T-cell (primary cell): ENCODE measurements at regions of chr3 and their contacts with region 1.

Region 1: DNA sequence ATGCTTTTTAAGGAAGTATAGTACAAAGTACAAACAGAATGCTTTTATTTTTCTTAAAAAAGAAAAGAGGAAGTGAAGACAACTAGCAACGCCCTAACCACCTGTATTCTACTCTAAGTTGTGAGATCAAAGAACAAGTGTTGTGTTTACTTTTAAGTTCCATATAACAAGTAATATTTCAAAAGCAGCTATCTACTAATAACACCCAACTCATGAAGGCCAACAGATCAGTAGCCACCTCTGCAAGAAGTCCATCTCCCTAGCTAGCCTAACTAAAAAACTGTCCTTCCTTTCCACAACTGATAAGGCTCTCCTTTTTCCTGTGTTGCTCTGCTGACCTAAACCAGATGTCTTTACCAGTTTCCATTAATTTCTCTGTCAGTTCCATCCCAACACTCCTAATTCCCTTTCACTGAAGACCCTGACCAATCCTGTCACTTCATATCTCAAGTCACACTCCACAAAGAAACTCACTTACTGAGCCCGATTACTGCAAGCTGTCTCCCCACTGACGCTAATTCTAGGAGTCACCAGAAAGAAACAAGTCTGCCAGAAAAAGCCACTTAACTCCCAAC is 26.9 kb downstream of the PHC3 start:
- DNase-seq: peak in 1 of 35 experiments; percentile 26
- ATAC-seq: peak; percentile 77 to 90 (median 84)
- H3K4me3 ChIP-seq: peak overlapping the region in 1 of 2 donors; percentile 19
- H3K4me3 Mint-ChIP-seq: peak overlapping the region; percentile 59 to 78 (median 61)
- H3K27ac ChIP-seq: peak overlapping the region; percentile 52
- H3K27ac Mint-ChIP-seq: peak overlapping the region; percentile 93 to 98
- H3K4me1 ChIP-seq: peaks cover 24 to 30% of the 10 kb centered on the region in 2 experiments
- H3K4me1 Mint-ChIP-seq: peaks cover 55 to 65% (median 57%) of the 10 kb centered on the region in 3 donors
- H3K27me3 ChIP-seq: no peaks in the 10 kb centered on the region
- H3K27me3 Mint-ChIP-seq: no peaks in the 10 kb centered on the region

Region 2: GRCh38 chr3:170144437-170144843 is 10.2 kb before region 1 on chr3:
- CTCF ChIA-PET with region 1: interaction called in 1 of 2 experiments, 3 read pairs
- POLR2A ChIA-PET with region 1: interaction called, 5 to 11 read pairs
- DNase-seq: no peak
- ATAC-seq: no peak
- H3K4me3 ChIP-seq: no peak overlapping the region
- H3K4me3 Mint-ChIP-seq: no peak overlapping the region
- H3K27ac ChIP-seq: no peak overlapping the region
- H3K27ac Mint-ChIP-seq: peak overlapping the region in 1 of 2 donors; percentile 43
- H3K4me1 ChIP-seq: peaks cover 3 to 4% of the 10 kb centered on the region in 2 experiments
- H3K4me1 Mint-ChIP-seq: peaks cover 30 to 43% (median 42%) of the 10 kb centered on the region in 3 donors
- H3K27me3 ChIP-seq: no peaks in the 10 kb centered on the region
- H3K27me3 Mint-ChIP-seq: no peaks in the 10 kb centered on the region

Region 3: GRCh38 chr3:170221924-170222646 is 67.4 kb after region 1 on chr3 and contains the start of gene PRKCI:
- CTCF ChIA-PET with region 1: no interaction called
- POLR2A ChIA-PET with region 1: no interaction called
- DNase-seq: peak; percentile 62 to 92 (median 76)
- ATAC-seq: peak; percentile 90 to 97 (median 96)
- H3K4me3 ChIP-seq: peak within 1 kb of the TSS; percentile 67 to 77
- H3K4me3 Mint-ChIP-seq: peak within 1 kb of the TSS; percentile 92 to 93 (median 92)
- H3K27ac ChIP-seq: peak within 1 kb of the TSS; percentile 72
- H3K27ac Mint-ChIP-seq: peak within 1 kb of the TSS; percentile 92 to 97
- H3K4me1 ChIP-seq: peaks cover 8 to 12% of the 10 kb centered on the region in 2 experiments
- H3K4me1 Mint-ChIP-seq: peaks cover 27 to 38% (median 35%) of the 10 kb centered on the region in 3 donors
- H3K27me3 ChIP-seq: no peaks in the 10 kb centered on the region
- H3K27me3 Mint-ChIP-seq: no peaks in the 10 kb centered on the region
- total RNA-seq, gene PRKCI: 17.1 to 26.3 (median 23.9) TPM